Mammary epithelial cell (primary cell): ENCODE measurements at regions of chr5 and their contacts with region 1.

Region 1: GRCh38 chr5:14410394-14411201 is 171.0 kb upstream of the OTULINL start:
- DNase-seq: no peak
- H3K4me3 ChIP-seq: no peak overlapping the region
- H3K27ac ChIP-seq: no peak overlapping the region
- H3K4me1 ChIP-seq: peaks cover 17% of the 10 kb centered on the region
- H3K27me3 ChIP-seq: no peaks in the 10 kb centered on the region
- CTCF ChIP-seq: no peak

Region 2: GRCh38 chr5:14491015-14491915 is 80.7 kb after region 1 on chr5:
- CTCF ChIA-PET with region 1: no interaction called
- dilution Hi-C with region 1: loop called (anchors 5 kb)
- in situ Hi-C with region 1: no loop called
- intact Hi-C with region 1: no loop called
- DNase-seq: no peak
- H3K4me3 ChIP-seq: no peak overlapping the region
- H3K27ac ChIP-seq: no peak overlapping the region
- H3K4me1 ChIP-seq: no peaks in the 10 kb centered on the region
- H3K27me3 ChIP-seq: no peaks in the 10 kb centered on the region
- CTCF ChIP-seq: no peak